Motor neuron (in vitro differentiated cells): ENCODE measurements at regions of chr11 and their contacts with region 1.

Region 1: GRCh38 chr11:36746886-36747710 is 149.1 kb upstream of the RAG2 start:
- ATAC-seq: peak; percentile 86 to 100 (median 98)
- H3K4me3 ChIP-seq: no peak overlapping the region
- H3K27ac ChIP-seq: no peak overlapping the region
- H3K4me1 ChIP-seq: no peaks in the 10 kb centered on the region

Region 2: GRCh38 chr11:36699271-36699670 is 47.8 kb before region 1 on chr11:
- in situ Hi-C with region 1: loop called in 1 of 9 experiments (anchors 10 kb)
- ATAC-seq: no peak
- H3K4me3 ChIP-seq: no peak overlapping the region
- H3K27ac ChIP-seq: no peak overlapping the region
- H3K4me1 ChIP-seq: peaks cover 0 to 6% of the 10 kb centered on the region in 2 donors